Mammary epithelial cell (primary cell): ENCODE measurements at regions of chr6 and their contacts with region 1.

Region 1: GRCh38 chr6:77273929-77274328 is 189.4 kb downstream of the HTR1B start:
- DNase-seq: no peak
- H3K4me3 ChIP-seq: no peak overlapping the region
- H3K27ac ChIP-seq: no peak overlapping the region
- H3K4me1 ChIP-seq: no peaks in the 10 kb centered on the region
- H3K27me3 ChIP-seq: no peaks in the 10 kb centered on the region
- CTCF ChIP-seq: no peak

Region 2: GRCh38 chr6:77292564-77293546 is 18.9 kb after region 1 on chr6:
- CTCF ChIA-PET with region 1: no interaction called
- dilution Hi-C with region 1: no loop called
- in situ Hi-C with region 1: no loop called
- intact Hi-C with region 1: loop called (anchors 1 kb)
- DNase-seq: peak; percentile 78
- H3K4me3 ChIP-seq: peak overlapping the region in 2 of 3 experiments; percentile 15 to 18
- H3K27ac ChIP-seq: peak overlapping the region; percentile 79
- H3K4me1 ChIP-seq: peaks cover 39% of the 10 kb centered on the region
- H3K27me3 ChIP-seq: no peaks in the 10 kb centered on the region
- CTCF ChIP-seq: no peak